Tibial artery (tissue), 4 donors: ENCODE measurements at regions of chr1 and their contacts with region 1.

Region 1: GRCh38 chr1:113674594-113674993 is 84.7 kb downstream of the PHTF1 start:
- DNase-seq: no peak
- H3K4me3 ChIP-seq: no peak overlapping the region
- H3K27ac ChIP-seq: no peak overlapping the region
- H3K4me1 ChIP-seq: no peaks in the 10 kb centered on the region
- H3K27me3 ChIP-seq: no peaks in the 10 kb centered on the region
- CTCF ChIP-seq: no peak

Region 2: GRCh38 chr1:113140588-113141446 is 533.8 kb before region 1 on chr1:
- intact Hi-C with region 1: loop called (anchors 5 kb)
- DNase-seq: peak; percentile 64 to 71
- H3K4me3 ChIP-seq: peak overlapping the region in 1 of 2 donors; percentile 16
- H3K27ac ChIP-seq: peak overlapping the region in 1 of 2 donors; percentile 11
- H3K4me1 ChIP-seq: peaks cover 0 to 15% (median 6%) of the 10 kb centered on the region in 4 donors
- H3K27me3 ChIP-seq: no peaks in the 10 kb centered on the region
- CTCF ChIP-seq: peak; percentile 75 to 76